Activated naive CD4-positive, alpha-beta T cell treated with anti-CD3 and anti-CD28 coated beads for 36 hours (primary cell): ENCODE measurements at regions of chr7 and their contacts with region 1.

Region 1: GRCh38 chr7:36986429-36987362 is 262.4 kb upstream of the AOAH start:
- DNase-seq: peak; percentile 80
- H3K4me3 Mint-ChIP-seq: no peak overlapping the region
- H3K27ac Mint-ChIP-seq: no peak overlapping the region
- H3K4me1 Mint-ChIP-seq: peaks cover 27% of the 10 kb centered on the region
- H3K27me3 Mint-ChIP-seq: no peaks in the 10 kb centered on the region

Region 2: DNA sequence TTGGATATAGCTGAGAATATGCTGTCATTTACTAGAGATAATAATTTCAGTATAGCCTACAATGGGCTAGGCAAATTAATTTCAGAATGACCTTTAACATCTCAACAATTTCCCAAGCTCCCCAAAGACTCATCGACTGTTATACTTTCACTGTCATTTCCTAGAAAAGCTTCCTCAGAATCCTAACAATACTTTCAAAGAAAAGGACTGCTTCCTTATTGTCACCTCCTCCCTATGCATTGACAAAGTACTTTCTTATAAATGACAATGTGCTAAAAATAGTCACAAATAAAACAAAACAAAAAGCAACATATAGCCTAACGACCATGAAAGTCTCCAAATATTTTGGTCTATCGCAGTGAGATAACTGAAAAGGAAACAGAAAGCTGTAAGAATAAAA is 189.4 kb after region 1 on chr7:
- CTCF ChIA-PET with region 1: interaction called, 71 read pairs
- intact Hi-C with region 1: no loop called
- DNase-seq: no peak
- H3K4me3 Mint-ChIP-seq: no peak overlapping the region
- H3K27ac Mint-ChIP-seq: no peak overlapping the region
- H3K4me1 Mint-ChIP-seq: peaks cover 2% of the 10 kb centered on the region
- H3K27me3 Mint-ChIP-seq: no peaks in the 10 kb centered on the region

Region 3: DNA sequence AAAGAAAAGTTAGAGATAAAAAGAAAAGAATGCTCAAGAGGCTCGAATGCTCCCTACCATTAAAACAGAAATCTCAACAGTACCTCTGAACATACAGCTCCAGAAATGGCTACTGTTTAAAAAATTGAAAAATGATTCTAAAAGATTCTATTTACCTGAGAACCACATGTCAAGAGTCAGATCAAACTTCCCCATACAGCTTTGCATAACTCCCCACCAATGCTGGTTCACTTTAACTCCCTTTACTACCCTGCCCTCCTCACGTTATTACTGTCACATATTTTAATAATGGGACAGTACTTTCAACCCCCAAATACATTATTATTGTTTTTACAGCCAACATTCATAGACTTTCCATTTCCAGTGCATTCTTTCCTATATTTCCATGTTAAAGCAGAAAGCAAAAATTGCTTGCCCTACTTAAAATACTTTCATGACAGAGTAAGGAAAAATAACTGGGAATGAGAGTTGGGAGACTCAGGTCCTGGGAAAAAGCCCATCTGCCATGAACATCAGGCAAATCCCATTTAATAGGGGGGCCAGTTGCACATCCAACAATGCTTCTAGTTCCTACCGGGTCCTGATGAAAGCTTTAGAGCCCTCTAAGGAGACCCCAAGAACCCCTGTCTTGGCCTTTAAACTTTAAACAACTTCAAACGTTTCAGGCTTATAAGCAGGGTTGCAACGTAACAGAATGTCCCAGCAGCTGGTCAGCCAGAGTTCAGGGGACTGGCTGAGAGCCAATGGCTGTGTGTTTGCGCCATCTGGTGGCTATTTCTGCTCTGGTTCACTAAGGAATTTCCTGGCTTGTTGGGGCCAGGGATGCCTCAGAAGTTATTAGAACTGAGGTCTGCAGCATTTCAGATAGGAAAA is 214.5 kb after region 1 on chr7:
- CTCF ChIA-PET with region 1: interaction called, 5 read pairs
- intact Hi-C with region 1: loop called (anchors 1 kb)
- DNase-seq: peak; percentile 64
- H3K4me3 Mint-ChIP-seq: no peak overlapping the region
- H3K27ac Mint-ChIP-seq: no peak overlapping the region
- H3K4me1 Mint-ChIP-seq: peaks cover 2% of the 10 kb centered on the region
- H3K27me3 Mint-ChIP-seq: no peaks in the 10 kb centered on the region